ENCODE measurements at regions of chr3 and their contacts with region 1.

Region 1: GRCh38 chr3:152937234-152937633 is 102.3 kb downstream of the P2RY1 start:
- DNase-seq: no peak
- ATAC-seq: no peak

Region 2: GRCh38 chr3:152508705-152509104 is 428.5 kb before region 1 on chr3:
- intact Hi-C with region 1: loop called (anchors 10 kb)
- DNase-seq: no peak
- ATAC-seq: no peak

Region 3: DNA sequence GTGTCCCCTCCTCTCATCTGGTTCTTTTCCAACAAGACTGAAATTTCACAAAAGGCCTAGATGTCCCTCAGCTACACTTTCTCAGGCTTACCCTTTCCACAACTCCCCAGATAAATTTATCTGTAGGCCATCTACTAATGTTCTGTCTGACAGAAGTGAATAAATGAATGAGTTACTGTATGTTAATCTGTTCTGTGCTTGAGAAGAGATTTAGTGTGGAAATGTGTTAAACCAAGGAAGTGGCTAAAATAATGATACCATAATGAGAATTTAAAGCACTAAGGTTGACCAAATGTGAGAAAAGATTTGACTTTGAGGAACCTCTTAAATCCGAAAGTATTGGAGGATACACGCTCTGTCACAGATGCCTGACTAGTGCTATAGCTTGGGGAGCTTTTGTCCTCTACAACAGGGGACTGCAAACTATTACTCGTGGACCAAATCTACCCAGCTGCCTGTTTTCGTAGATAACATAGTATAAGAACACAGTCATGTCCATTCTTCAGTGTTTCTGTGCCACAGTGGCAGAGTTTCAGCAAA is 177.1 kb before region 1 on chr3:
- intact Hi-C with region 1: no loop called
- DNase-seq: no peak
- ATAC-seq: no peak

Region 4: DNA sequence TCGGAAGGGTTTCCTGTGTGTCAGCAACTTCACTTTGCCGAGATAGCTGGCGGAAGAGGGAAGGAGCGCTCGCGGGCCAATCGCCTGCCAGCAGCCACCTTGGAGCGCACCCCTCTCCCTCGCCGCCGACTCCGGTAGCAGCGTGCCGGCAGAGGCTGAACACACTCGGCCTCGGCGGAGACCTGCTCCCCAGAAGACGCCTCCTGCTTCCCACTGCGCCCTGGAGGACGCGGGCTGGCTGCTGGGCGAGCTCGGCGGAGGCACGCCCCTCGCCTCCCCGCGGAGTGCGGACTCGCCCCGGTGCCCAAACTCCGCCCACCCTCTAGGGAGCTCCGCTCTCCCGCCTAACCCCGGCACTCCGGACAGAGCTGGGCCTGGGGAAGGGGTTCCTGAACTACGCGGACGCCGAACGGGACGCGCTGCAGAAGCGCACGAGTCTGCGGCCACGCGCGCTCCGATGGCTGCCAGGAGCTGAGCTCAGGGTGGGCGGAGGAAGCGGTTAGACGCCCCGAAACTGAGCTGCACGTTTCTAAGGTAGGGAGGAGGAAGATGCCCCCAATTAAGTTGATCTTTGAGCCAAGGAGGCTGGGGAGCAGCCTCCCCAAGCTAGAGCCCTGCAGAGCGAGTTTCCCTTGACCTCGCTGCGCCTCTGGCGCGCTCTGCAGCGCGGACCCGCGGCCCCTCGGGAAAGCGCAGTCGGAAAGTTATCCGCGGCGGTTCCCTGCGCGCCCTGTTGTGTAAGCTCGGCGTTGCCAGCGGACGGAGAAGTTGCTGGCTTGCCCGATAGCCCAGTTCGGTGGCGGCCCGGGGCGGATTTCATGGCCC is 102.2 kb before region 1 on chr3 and contains the start of gene P2RY1:
- intact Hi-C with region 1: loop called (anchors 5 kb)
- DNase-seq: peak; percentile 85
- ATAC-seq: peak; percentile 92
- total RNA-seq, gene P2RY1: 10.1 TPM

Measured in Right ventricle myocardium inferior (tissue), 1 donor.